ENCODE measurements at regions of chr13 and their contacts with region 1.

Region 1: DNA sequence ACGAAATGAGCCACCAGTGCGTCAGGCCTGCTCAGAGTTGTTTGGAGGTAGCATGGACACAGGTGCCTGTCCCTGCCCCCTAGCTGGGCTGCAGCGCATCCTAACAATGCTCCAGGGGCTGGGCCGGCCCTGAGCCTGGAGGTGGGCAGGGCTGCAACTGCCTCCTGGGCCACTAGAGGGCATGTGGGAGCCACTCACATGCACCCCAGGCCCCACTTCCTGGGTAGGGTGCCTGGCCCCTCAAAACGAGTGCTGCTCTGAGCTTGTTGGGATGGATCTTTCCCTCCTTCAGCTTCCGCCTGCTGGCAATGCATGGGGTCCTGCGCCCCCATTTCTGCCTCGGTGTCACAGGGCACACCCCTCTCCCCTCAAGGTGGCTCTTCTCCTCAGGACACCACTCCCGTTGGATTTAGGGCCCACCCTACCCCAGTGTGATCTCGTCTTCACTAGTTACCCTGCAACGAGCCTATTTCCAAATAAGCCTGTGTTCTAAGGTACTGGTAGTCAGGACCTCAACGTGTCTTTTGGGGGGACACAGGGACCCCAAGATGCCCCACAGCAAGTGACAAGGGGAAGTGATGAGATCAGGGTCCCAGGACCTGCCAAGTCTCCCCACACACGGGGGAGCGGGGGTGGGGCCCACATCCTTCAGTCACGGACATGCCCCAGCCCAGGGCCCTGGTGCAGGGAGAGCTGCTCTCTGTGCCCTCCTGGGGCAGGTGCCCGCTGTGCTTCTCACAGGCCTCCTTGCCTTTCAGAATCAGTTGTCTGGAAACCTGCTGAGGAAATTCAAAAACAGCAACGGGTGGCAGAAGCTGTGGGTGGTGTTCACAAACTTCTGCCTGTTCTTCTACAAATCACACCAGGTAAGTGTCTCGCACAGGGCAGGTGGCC is 131.3 kb downstream of the STK24 start:
- DNase-seq: peak; percentile 58
- H3K4me3 Mint-ChIP-seq: no peak overlapping the region
- H3K27ac Mint-ChIP-seq: no peak overlapping the region
- H3K4me1 Mint-ChIP-seq: no peaks in the 10 kb centered on the region
- H3K27me3 Mint-ChIP-seq: no peaks in the 10 kb centered on the region
- CTCF ChIP-seq: peak; percentile 42

Region 2: DNA sequence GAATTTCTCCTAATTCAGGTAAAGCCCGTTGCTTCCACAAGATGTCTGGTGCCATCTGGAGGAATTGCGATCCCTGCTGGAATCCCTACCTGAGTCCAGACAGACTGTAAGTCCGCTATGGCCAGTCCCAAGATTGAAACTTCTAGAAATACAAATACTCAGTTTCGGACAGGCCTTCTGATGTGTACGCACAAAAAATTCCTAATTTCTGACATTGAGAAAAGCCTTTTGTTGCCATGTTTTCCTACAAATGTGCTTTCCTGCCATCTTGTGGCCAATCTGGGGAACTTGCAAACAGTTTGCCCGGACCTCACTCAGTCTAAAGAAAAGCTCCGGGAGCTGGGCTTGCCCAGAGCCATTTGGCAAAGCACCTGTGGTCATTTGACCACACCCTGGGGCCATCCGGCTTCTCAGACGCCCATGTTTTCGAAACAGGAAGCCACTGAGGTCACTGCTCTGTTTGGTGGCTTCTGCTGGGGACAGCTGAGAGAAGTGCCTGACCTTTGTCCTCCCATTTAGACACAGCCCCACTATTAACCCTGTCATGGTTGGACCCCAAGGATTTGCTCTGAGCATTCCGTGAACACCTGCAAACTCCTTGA is 227.5 kb after region 1 on chr13:
- CTCF ChIA-PET with region 1: interaction called, 4 read pairs
- intact Hi-C with region 1: loop called (anchors 5 kb)
- DNase-seq: peak; percentile 51
- H3K4me3 Mint-ChIP-seq: no peak overlapping the region
- H3K27ac Mint-ChIP-seq: no peak overlapping the region
- H3K4me1 Mint-ChIP-seq: no peaks in the 10 kb centered on the region
- H3K27me3 Mint-ChIP-seq: no peaks in the 10 kb centered on the region
- CTCF ChIP-seq: peak; percentile 41